ENCODE measurements at regions of chr9 and their contacts with region 1.

Region 1: DNA sequence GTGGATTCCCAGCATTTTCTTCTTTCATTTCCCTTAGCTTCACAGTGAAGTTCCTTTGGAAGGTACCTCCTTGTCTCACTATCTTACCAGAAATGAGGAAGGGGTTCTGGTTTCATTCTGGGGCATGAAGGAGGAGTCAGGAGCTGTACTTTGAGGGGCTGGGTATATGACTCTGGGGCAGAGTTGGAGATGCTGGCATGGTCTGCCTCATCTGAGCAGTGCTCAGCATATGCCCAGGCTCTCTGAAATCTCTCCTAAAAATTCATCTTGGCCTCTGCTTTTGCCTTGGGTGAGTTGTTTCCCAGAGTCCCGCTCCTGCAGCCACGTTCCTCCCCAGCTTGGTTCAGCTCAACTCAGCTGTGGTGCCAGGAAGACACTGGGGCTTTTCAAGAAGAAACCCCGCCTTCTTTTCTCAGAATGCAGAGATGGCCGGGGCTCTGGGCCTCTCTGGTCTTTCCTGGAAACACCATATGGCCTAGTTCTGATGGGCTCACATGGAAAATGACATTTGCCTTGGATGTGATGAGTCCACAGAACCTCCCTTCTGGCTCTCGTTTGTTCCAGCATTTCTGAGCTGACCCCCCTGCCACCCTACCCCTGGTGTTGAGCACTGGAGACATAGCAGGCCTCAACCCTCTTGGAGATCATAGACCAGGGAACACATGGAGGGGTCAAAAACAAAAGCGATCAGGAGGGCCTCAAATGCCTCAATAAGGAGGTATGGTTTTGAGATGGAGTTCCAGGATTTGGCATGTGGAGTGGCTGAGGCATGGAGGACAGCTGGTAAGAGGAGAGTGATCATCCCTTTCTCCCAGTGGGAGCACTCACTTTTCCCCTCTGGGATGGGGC is 12.0 kb upstream of the TGFBR1 start:
- DNase-seq: peak; percentile 91
- ATAC-seq: peak; percentile 89
- H3K4me3 Mint-ChIP-seq: peak overlapping the region; percentile 57
- H3K27ac Mint-ChIP-seq: peak overlapping the region; percentile 99
- H3K4me1 Mint-ChIP-seq: peaks cover 69% of the 10 kb centered on the region
- H3K27me3 Mint-ChIP-seq: no peaks in the 10 kb centered on the region

Region 2: DNA sequence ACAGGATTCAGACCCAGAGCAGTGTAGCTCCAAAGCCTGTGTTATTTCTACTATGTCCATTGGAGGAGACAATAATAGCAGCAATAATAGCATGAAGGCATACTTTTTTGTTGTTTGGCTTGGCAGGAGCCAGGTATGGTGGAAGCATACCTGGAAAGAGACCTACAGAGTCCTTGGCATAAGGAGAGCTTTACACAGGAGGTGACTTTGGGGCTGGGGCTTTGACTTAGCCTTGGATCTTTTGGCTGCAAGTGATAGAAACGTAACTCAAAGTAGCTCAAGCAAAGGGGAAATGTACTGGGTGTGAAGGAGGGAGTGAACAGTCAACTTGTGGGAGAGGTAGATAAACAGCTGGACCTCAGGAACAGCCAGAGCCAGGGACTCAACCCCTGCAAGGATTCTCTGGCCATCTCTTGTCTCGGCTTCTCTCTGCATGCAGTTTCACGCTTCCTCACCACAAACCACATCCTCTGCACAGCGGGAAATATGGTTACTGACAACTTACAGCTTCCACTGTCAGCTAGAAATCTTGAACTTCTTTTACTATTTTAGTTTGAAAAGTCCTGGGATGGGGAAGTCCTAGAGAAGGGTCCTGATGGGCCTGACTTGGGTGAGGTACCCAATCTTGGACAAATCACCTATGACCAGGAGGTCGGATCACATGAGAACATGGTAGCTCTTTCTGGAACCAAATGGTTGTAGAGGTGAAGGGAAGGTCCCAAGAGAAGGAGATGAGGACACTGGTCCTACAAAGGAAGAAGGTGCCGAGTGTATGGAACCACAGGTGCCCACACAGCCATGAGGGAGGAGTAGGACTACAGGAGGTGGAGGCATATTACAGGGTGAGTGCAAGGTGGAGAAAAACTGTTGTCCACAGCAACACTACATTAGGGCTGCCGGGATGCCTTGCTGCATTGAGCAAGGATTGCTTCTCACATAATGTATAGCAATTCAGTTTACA is 34.9 kb before region 1 on chr9:
- CTCF ChIA-PET with region 1: interaction called, 13 read pairs
- DNase-seq: peak; percentile 97
- ATAC-seq: peak; percentile 65
- H3K4me3 Mint-ChIP-seq: peak overlapping the region; percentile 73
- H3K27ac Mint-ChIP-seq: peak overlapping the region; percentile 92
- H3K4me1 Mint-ChIP-seq: peaks cover 73% of the 10 kb centered on the region
- H3K27me3 Mint-ChIP-seq: no peaks in the 10 kb centered on the region

Region 3: GRCh38 chr9:99076483-99077171 is 16.2 kb before region 1 on chr9:
- CTCF ChIA-PET with region 1: interaction called, 14 read pairs
- DNase-seq: peak; percentile 82
- ATAC-seq: peak; percentile 95
- H3K4me3 Mint-ChIP-seq: peak overlapping the region; percentile 1
- H3K27ac Mint-ChIP-seq: peak overlapping the region; percentile 95
- H3K4me1 Mint-ChIP-seq: peaks cover 41% of the 10 kb centered on the region
- H3K27me3 Mint-ChIP-seq: no peaks in the 10 kb centered on the region

Measured in activated CD8-positive, alpha-beta memory T cell treated with anti-CD3 and anti-CD28 coated beads, Interleukin-2, amount 10 ng/mL, durations not matched to agents 7 days and 5 days (primary cell).